Right ventricle myocardium inferior (tissue), 1 donor: ENCODE measurements at regions of chr7 and their contacts with region 1.

Region 1: GRCh38 chr7:22481726-22482125 is 18.3 kb downstream of the STEAP1B start:
- DNase-seq: no peak
- ATAC-seq: no peak

Region 2: DNA sequence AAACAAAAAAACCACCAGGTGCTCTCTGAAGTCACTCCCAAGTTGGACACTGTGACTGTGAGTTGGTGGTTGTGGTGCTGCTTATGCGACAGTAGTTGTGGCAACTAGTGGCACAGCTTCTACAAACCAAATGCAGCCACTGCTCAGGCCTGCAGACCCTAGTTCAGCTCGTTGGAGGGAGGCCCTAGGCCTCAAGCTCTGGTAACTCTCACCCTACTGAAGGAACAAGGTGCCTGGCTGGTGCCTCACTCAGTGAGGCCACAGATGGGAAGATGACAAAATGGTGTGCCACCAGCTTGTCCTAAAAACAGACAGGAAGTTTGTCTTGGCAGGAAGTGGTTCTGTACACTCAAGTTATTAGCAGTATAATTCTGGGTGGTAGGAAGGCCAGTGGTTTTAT is 79.5 kb before region 1 on chr7:
- intact Hi-C with region 1: no loop called
- DNase-seq: peak; percentile 61
- ATAC-seq: no peak

Region 3: DNA sequence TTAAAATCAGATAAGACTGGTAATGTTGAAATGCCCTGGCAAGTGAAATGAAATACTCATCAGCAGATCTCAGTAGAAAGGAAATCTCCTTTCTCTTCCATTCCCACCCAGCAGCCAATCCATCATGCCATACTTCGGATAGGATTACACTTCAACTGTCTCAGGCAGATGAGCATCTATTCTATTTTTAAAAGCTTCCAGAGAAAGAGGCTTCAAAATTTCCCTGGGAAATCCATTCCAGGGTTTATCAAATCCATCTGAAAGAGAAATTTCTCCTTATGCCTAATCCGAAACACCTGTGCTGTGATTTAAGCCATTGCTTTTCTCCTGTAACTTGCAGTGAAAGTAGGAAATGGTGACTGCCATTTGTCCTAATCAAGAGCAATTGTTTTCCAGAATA is 64.4 kb before region 1 on chr7:
- intact Hi-C with region 1: no loop called
- DNase-seq: no peak
- ATAC-seq: no peak

Region 4: DNA sequence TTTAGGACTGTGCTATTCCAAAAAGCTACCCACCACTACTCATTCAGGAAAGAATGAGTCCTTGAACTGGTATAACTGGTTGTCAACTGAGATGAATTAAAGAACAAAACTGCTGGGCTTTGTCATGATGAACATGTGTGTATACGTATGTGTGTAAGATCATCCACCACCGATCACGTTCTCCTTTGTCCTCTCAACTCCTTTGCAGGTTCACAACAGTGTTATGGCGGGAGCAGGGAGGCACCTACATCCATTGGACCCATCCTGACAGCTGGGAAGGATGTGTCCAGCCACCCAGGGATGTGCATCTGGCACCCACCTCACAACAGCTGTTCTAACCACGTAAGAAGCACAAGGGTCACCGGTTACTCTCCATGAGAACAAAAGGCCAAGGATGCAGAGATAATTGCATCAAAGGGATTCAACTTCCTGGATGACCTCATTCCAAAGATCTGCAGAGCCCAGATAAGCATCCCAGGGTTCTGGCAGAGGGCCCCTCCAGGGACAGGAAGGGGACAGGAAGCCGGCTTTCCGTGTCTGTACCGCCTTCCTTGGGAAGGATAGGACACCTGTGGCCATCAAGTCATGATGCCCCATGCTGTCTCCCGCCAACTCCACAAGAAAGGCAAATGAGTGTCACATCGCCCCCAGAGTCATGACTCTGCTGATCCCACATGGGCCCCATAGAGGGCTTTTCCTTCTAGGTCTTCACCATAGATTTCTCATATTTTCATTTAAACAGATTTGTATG is 47.8 kb before region 1 on chr7:
- intact Hi-C with region 1: loop called (anchors 5 kb)
- DNase-seq: no peak
- ATAC-seq: peak; percentile 42

Region 5: GRCh38 chr7:22445140-22445743 is 36.5 kb before region 1 on chr7:
- intact Hi-C with region 1: loop called (anchors 5 kb)
- DNase-seq: peak; percentile 84
- ATAC-seq: peak; percentile 95

Region 6: GRCh38 chr7:22651534-22652243 is 170.0 kb after region 1 on chr7:
- intact Hi-C with region 1: no loop called
- DNase-seq: no peak
- ATAC-seq: no peak

Region 7: DNA sequence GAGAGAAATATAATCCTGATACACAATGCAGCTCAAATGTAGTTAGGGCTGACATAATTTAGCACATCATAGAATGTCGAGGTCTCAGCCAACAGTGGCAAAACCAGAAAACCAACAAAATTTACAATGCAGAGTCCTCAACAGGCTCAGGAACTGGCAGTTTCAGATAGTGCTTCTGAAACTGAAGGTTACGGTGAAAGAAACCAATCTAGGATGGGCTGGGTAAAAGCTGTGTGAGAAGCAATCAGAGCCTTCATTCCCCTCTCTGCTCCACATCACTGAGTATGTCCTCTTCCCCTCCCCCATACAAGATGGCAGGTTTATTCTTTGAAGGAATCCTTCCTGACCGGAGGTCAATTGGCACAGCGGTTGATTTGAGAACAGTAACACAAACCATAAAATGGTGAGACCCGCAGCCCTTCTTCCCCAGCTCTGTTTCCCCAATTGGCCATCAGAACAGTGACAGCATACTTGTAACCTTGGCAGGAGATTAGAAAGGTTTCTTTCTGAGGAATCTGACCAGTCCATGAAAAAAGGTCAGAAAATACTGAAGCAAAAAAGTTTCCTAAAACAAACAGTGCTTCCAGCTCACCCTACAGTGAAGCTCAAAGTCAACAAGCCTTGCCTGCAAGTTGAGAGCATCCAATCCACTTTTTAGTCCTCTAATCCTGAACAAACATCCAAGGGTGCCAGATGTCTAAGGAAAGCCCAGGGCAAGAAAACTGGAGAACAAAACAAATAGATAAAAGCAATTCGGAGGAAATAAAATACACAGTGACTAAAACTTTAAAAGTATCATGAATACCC is 191.3 kb after region 1 on chr7:
- intact Hi-C with region 1: no loop called
- DNase-seq: no peak
- ATAC-seq: no peak